Activated CD4-positive, alpha-beta T cell treated with anti-CD3 and anti-CD28 coated beads for 36 hours (primary cell): ENCODE measurements at regions of chr14 and their contacts with region 1.

Region 1: DNA sequence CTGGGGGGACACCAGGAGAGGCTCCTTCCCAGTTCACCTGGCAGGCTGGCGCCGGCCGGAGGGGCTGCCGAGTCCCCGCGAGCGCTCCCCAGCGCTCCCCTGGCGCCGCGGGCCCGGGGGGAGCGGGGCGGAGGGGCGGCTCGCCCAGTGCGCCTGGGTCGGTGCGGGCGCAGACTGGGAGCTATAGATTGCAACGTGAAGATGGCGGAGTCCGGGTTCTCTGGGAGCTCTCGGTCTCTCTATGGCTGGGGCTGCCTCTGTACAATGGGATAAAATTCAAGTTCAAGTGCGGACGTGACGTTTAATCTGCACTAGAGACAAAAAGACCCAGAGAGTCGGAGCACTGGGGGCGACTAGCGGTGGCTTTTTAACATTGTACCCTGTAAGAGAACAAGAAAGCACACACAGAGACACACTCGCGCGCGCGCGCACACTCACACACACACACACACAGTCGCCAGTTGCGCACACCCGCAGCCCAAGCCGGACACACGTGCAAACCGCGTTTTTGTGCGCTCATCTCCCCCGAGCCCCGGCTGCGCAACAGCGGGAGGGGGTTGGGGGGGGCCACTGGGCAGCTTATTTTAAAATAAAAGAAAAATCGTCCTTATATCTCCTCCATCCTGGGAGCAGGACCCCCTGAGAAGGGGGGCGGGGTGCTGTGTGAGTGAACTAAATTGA is at the start of gene BCL11B:
- DNase-seq: peak; percentile 95
- ATAC-seq: peak; percentile 76
- H3K4me3 Mint-ChIP-seq: peak within 1 kb of the TSS; percentile 87
- H3K27ac Mint-ChIP-seq: peak within 1 kb of the TSS; percentile 98
- H3K4me1 Mint-ChIP-seq: peaks cover 32% of the 10 kb centered on the region
- H3K27me3 Mint-ChIP-seq: peaks cover 2% of the 10 kb centered on the region
- total RNA-seq, gene BCL11B: 62.1 to 66.2 TPM

Region 2: DNA sequence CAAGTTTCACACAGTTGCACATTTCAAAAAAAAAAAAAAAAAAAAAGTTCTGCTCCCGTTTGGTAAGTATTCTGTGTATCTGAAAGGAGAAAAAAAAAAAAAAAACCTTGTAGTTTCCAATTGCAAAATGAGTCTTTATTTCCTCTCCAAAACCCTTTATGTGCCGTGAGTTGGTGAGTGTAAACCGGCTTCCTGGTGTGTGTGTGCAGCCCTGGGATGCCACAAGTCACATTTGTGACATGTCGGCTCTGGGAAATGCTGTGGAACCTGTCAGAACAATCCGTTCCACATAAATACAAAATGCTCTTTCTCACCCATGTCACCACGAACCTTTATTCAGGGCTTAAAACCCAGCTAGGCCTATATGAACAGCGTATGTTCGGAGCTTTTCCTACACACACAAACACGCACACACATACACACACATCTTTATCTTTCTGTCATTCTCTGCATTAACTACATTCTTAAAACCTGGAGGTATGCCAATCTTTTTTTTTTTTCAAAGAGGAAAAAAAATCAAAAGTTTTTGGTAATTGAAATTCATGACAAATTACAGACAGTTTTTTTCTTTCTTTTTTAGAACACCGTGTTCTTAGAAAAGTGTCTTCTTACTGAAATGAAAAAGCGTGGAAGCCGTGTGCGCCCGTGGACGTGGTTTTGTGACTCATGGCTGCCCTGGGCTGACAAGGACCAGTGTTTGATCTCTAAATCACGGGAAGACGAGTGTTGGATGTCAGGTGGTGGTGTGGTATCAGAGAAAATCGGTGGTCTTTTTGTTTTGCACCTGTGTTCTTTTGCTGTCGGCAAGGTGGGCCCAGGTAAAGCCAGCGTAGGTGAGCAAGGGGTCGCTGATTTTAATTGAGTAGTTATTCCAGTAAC is 1862.9 kb before region 1 on chr14:
- CTCF ChIA-PET with region 1: no interaction called
- POLR2A ChIA-PET with region 1: interaction called, 4 read pairs
- intact Hi-C with region 1: loop called in 1 of 2 experiments (anchors 2 kb)
- DNase-seq: peak; percentile 74
- ATAC-seq: peak; percentile 86
- H3K4me3 Mint-ChIP-seq: peak overlapping the region; percentile 57
- H3K27ac Mint-ChIP-seq: peak overlapping the region; percentile 89
- H3K4me1 Mint-ChIP-seq: peaks cover 32% of the 10 kb centered on the region
- H3K27me3 Mint-ChIP-seq: peaks cover 4% of the 10 kb centered on the region

Region 3: DNA sequence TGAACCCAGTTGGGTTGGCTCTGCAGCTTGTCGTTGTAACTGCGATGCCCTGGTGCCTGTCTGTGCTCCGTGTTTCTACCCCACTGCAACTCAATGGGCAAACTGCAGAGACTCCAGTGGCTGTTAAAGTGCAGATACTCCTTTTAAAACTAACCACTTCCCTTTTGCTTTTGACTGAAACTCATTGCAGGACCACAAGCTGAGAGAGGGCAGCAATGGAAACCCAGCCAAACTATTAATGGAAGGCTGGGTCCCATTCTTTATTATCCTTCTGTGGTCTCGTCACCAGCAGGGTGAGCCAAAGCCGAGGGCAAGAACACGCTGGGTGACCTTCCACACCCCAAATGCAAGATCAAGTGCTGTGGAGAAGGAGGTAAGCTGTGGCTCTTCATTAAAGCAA is 1564.5 kb before region 1 on chr14:
- CTCF ChIA-PET with region 1: no interaction called
- POLR2A ChIA-PET with region 1: no interaction called
- intact Hi-C with region 1: loop called (anchors 5 to 10 kb)
- DNase-seq: peak; percentile 39
- ATAC-seq: peak; percentile 32
- H3K4me3 Mint-ChIP-seq: no peak overlapping the region
- H3K27ac Mint-ChIP-seq: no peak overlapping the region
- H3K4me1 Mint-ChIP-seq: peaks cover 96% of the 10 kb centered on the region
- H3K27me3 Mint-ChIP-seq: no peaks in the 10 kb centered on the region

Region 4: DNA sequence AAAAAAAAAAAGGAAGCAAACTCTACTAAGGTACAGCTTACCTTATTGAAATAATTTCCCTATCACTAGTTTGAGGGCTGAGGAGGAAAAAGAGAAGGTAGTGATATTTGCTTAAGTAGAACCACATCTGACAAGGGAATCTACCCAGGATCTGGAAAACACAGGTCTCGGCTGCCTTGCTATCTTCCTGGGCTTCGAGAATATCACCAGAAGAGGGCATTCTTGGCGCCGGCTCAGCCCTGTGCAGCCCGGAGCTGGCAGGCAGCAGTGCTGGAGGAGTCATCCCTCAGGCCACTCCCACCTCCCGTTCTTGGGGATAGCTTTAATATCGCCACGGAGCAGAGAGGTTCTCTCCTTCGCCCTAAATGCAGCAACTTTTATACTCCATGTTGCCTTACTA is 1293.8 kb before region 1 on chr14:
- CTCF ChIA-PET with region 1: interaction called, 5 read pairs
- POLR2A ChIA-PET with region 1: interaction called, 3 read pairs
- intact Hi-C with region 1: loop called (anchors 1 to 5 kb)
- DNase-seq: peak; percentile 93
- ATAC-seq: peak; percentile 87
- H3K4me3 Mint-ChIP-seq: peak overlapping the region; percentile 94
- H3K27ac Mint-ChIP-seq: peak overlapping the region; percentile 95
- H3K4me1 Mint-ChIP-seq: peaks cover 63% of the 10 kb centered on the region
- H3K27me3 Mint-ChIP-seq: no peaks in the 10 kb centered on the region

Region 5: GRCh38 chr14:98173305-98173704 is 1098.8 kb before region 1 on chr14:
- CTCF ChIA-PET with region 1: interaction called, 4 read pairs
- POLR2A ChIA-PET with region 1: interaction called, 3 read pairs
- intact Hi-C with region 1: loop called (anchors 2 kb)
- DNase-seq: peak; percentile 70
- ATAC-seq: no peak
- H3K4me3 Mint-ChIP-seq: peak overlapping the region; percentile 50
- H3K27ac Mint-ChIP-seq: peak overlapping the region; percentile 99
- H3K4me1 Mint-ChIP-seq: peaks cover 99% of the 10 kb centered on the region
- H3K27me3 Mint-ChIP-seq: no peaks in the 10 kb centered on the region

Region 6: DNA sequence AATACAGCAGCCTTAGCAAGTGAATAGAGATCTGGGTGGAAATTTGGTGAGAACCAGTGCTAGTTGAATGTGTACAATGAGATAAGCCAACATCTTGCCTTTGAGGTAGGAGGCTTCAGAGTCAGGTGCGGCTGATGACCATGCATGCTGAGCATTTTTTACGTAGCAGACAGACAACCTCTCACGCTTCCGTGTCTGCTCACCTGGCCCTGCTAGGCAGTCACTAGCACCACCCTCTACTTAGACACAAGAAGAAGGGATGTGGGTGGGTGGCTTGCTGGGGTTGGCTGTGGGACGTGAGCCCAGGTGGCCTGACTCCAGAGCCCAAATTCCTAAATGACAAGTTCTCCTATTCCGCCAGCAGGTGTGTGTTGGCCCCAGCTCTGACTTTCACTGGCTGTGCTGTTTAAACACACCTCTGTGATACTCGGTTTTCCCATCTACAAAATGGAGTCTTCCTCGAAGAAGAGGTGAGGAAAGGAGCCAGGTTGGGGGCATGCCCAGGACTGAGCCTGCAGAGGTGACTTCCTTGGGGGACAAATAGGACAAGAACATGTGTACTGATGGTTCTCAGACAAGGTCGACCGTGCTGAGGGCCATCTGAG is 57.7 kb after region 1 on chr14:
- CTCF ChIA-PET with region 1: no interaction called
- POLR2A ChIA-PET with region 1: no interaction called
- intact Hi-C with region 1: no loop called
- DNase-seq: no peak
- ATAC-seq: no peak
- H3K4me3 Mint-ChIP-seq: no peak overlapping the region
- H3K27ac Mint-ChIP-seq: no peak overlapping the region
- H3K4me1 Mint-ChIP-seq: no peaks in the 10 kb centered on the region
- H3K27me3 Mint-ChIP-seq: peaks cover 4% of the 10 kb centered on the region

Region 7: DNA sequence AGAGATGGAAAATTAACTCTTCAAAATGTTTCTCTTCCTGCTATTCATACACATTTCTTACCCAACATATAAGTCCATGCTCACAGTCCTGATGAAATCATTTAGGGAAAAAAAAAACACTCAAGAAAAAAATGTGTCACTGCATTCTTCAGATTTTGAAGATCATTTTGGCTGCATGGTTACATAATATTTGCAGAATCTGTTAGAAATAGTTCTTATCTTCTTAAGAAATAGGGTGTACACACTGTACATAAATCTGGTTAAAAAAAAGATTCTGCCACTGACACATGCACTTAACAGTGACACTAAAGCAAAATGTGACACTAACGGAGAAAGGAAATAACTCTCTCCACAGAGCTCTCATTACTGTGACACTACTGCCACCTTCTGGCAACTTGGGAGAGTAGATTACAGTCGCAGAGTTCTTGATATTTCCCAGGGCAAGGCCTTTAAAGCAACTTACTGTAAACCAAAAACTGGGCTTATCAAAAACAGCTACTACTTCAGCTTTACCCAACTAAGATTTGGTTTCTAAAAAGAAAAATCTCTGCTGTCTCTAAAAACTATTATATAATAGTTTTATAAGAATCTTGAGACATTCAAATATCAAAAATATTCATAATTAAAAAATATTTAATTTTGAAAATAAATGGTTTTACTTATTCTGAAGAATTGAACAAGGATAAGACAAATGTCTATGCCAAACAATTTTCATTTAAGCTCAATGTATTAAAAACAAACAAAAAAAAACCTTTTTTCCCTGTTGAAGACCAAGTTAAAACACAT is 143.6 kb after region 1 on chr14:
- CTCF ChIA-PET with region 1: interaction called, 4 read pairs
- POLR2A ChIA-PET with region 1: interaction called, 3 read pairs
- intact Hi-C with region 1: loop called (anchors 1 to 5 kb)
- DNase-seq: peak; percentile 74
- ATAC-seq: peak; percentile 95
- H3K4me3 Mint-ChIP-seq: no peak overlapping the region
- H3K27ac Mint-ChIP-seq: peak overlapping the region; percentile 23
- H3K4me1 Mint-ChIP-seq: peaks cover 31% of the 10 kb centered on the region
- H3K27me3 Mint-ChIP-seq: no peaks in the 10 kb centered on the region